HEK293T (cell line): ENCODE measurements at regions of chr14 and their contacts with region 1.

Region 1: GRCh38 chr14:22929104-22929847 is at the start of gene PRMT5:
- DNase-seq: peak; percentile 93

Region 2: DNA sequence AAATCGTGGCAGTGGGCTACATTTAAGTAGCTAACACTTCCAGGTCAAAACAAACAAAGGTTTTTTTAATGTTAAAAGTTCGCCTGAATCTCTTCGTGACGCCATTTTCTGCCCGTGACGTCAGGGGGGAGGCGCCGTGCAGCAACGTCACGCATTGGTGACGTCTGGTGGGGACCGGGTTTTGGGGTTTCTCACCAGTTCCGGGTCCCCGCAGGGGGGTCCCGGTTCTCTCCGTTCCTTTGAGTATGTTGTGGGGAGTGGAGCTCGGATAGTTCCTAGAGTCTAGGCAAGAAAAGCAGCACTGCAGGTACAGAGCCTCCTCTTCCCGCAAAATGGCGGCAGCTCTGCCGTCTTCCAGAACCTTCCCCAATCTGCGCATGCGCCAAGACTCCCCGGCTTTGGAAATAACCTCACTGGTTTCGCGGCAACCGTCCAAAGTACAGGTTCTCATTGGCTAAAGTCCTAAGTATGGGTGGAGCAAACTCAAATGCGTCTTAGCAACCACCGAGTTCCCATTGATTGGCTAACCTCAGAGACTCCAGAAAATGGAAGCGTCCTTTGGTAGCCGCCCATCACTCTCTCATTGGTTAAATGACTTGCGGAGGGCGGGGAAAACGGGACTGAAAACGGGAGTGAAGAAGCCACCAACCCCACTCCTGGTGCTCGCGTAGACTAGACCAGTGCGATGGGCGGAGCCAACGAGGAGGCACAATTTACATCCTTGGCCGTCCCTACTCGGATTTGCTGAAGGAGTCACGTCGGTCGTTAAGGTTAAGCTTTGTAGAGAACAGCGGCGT is 10.3 kb before region 1 on chr14 and contains the start of gene RBM23:
- CTCF ChIA-PET with region 1: interaction called, 21 read pairs
- POLR2A ChIA-PET with region 1: interaction called, 50 read pairs
- DNase-seq: peak; percentile 93

Region 3: DNA sequence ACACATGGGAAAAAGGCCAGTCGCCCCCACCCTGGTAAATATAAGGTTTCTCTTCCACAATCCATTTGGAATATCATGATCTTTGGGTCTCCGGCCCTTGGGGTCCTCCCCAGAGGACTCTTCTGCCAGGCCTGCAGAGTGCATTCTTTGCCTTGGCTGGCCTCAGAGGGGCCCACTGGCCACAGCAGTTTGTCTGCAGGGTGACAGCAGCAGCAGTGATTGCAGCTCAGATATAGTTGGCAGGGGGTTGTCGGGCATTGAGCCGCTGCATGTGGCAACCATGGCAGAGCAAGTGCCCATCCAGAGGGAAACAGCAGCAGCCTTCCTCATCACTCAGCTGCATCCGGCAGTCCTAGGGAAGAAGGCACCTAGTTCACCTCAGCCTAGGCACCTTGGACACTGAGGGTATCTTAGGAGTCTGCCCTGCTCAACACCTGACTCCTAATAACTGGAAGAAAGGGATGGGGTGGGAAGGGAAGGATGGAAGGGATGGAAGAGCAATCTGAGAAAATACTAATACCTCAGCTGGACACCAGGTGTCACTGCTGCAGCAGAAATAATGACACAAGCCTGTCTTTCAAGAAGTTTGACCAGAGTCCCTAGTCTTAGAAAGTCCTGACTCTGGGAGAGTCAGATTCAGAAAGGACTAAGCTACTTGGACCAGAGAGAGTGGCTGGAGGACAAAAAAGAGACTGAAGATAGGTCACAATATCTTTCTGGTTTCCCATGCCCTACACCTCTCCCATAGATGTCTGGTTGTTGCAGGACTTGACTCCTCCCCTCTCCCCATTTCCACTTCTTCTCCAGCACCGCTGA is 44.1 kb after region 1 on chr14:
- CTCF ChIA-PET with region 1: interaction called, 9 read pairs
- POLR2A ChIA-PET with region 1: interaction called, 17 read pairs
- DNase-seq: peak; percentile 61

Region 4: DNA sequence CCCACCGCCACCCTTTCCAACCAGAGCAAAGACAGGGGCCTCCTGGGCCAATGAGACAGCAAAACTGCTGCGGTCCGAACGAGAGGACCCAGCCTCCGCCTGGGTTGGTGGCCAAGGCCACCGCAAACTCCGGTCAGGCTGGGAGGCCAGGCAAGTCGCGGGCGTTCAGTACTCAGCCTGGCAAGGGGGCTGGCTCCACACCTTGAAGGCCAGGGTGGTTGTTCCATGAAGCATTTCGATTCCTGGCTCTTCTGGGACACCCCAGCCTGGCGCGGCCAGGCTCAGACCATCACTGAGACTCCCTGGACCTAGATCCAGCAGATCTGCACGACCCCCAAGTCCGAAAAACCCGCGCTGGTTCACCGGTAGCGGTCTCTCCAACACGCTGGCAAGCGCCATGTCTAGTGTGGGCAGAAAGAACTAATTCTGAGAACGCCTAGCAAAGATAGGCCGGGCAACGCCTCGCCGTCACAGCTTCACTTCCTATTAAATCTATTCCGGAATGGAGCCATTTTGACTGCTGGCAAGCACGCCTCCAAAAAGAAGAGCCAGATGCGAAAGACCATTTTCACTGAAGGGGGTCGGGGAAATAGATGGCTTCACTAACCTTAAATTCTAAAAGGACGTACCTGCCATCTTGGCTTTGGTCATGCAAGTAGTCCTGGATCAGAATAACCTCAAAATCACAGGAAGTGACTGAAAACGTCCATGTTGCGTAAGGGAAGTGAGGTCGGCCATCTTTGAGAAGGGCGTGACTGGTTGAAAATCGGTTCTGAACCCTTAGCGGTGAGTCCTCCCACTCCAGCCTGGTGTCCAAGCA is 105.4 kb after region 1 on chr14 and contains the start of gene PSMB5:
- CTCF ChIA-PET with region 1: no interaction called
- POLR2A ChIA-PET with region 1: no interaction called
- DNase-seq: peak; percentile 92